ENCODE measurements at regions of chr9 and their contacts with region 1.

Region 1: DNA sequence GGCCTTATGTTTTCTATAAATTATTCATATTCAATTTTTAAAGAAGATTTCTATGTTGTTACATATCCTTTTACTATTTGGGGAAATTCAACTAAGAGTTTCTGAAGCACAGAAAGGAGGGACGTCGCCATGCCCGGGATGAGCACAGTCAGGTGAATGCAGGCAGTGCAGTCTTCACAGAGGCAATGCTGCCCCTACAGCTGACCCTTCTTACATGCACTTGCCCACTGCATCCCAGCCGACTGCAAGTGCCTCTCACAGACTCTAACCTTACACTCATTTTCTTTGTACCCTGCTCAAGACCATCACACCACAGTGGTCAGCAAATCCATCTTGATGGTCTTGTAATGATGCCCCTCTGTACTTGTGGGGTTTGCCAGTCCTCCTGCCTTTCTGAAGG is 73.8 kb downstream of the SHC3 start:
- DNase-seq: no peak
- H3K4me3 ChIP-seq: no peak overlapping the region
- H3K27ac ChIP-seq: no peak overlapping the region
- H3K4me1 ChIP-seq: no peaks in the 10 kb centered on the region
- H3K27me3 ChIP-seq: no peaks in the 10 kb centered on the region
- CTCF ChIP-seq: no peak
- POLR2A ChIP-seq: no peak

Region 2: DNA sequence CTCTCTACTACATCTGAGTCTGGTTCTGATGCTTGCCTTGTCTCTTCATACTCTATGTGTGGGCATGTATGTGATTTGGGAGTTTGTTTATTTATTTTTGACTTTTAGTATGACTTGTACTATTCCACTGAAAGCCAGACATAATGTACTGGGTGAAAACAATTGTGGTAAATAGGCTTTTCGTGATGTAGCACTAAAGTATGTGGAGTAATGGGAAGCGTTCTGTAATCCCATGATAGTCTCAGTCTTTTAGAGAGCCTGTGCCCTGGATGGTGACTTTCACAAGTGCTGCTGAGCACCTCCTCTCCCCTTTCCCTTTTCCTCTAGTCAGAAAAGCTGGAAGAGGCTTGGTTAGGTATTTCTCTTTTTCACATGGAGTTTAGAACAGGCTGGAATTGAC is 199.3 kb before region 1 on chr9:
- intact Hi-C with region 1: loop called (anchors 5 kb)
- DNase-seq: no peak
- H3K4me3 ChIP-seq: no peak overlapping the region
- H3K27ac ChIP-seq: no peak overlapping the region
- H3K4me1 ChIP-seq: no peaks in the 10 kb centered on the region
- H3K27me3 ChIP-seq: no peaks in the 10 kb centered on the region
- CTCF ChIP-seq: no peak
- POLR2A ChIP-seq: no peak

Measured in breast epithelium (tissue), 4 donors.